ENCODE measurements at regions of chr5 and their contacts with region 1.

Region 1: DNA sequence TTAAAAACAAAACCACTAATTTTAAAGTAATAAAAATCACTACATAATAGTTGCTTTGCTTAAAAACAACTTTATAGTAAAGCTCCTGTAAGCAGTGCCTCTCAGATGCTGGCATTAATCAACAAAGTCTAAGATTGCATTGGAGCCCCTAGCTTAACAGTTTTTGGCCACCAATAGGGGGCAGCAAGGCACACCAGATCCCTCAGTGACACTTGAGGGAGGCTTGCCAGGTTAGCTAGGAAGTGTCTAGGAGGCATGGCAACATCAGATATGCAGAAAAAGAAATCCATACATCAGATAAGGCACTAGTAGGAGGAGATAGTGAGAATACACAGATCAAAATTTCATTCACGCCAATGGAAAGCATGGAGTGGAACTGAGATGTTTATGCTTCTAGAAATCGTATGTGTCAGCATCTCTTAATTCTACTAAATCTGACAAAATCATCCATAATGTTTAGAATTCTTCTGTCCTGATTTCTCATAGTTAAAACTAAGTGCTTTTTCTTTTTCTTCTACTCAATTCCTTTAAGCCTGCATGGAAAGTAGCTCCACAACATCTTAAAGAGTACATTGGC is 73.6 kb upstream of the PAM start:
- DNase-seq: peak; percentile 87
- H3K4me3 Mint-ChIP-seq: no peak overlapping the region
- H3K27ac Mint-ChIP-seq: no peak overlapping the region
- H3K4me1 Mint-ChIP-seq: no peaks in the 10 kb centered on the region
- H3K27me3 Mint-ChIP-seq: peaks cover 12% of the 10 kb centered on the region
- CTCF ChIP-seq: peak; percentile 91

Region 2: DNA sequence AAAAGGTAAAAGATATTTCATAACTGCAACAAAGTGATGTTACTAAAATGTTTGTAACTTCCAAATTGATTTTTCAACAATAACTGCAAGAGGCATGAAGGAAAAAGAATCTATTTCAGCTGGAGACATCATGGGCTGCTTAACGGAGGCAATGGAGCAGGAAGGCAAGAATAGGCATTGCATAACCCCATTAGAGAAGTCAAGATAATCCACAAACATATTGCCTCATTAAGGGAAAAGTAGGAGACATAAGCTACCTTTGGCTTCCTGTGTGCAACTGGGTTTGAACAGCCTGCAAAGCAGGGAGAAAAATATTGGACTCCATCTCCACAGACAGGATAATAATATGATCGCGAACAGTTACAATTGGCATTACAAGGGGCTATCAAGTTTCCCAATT is 432.1 kb before region 1 on chr5:
- CTCF ChIA-PET with region 1: no interaction called
- intact Hi-C with region 1: no loop called
- DNase-seq: no peak
- H3K4me3 Mint-ChIP-seq: no peak overlapping the region
- H3K27ac Mint-ChIP-seq: no peak overlapping the region
- H3K4me1 Mint-ChIP-seq: no peaks in the 10 kb centered on the region
- H3K27me3 Mint-ChIP-seq: no peaks in the 10 kb centered on the region
- CTCF ChIP-seq: no peak

Region 3: GRCh38 chr5:102700120-102700831 is 18.8 kb after region 1 on chr5:
- CTCF ChIA-PET with region 1: no interaction called
- intact Hi-C with region 1: no loop called
- DNase-seq: no peak
- H3K4me3 Mint-ChIP-seq: no peak overlapping the region
- H3K27ac Mint-ChIP-seq: no peak overlapping the region
- H3K4me1 Mint-ChIP-seq: no peaks in the 10 kb centered on the region
- H3K27me3 Mint-ChIP-seq: no peaks in the 10 kb centered on the region
- CTCF ChIP-seq: no peak

Region 4: DNA sequence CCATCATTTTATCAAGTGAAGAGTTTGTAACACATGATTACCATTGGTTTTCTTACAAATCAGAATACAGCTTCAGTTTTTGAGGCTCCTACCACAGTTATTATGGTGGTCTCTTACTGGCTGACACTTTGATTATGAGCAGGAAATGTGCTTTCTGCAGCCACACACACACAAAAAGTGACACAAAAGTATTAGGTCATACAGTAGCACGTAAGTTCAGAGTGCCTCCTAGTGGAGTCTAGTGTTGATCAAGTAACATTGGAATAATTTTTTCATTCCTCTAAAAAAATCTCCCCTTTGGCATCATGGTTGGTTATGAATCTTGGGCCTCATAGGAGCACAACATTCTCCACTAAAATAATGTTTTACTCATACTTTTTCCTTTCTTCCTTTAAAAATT is 111.2 kb after region 1 on chr5:
- CTCF ChIA-PET with region 1: interaction called, 6 read pairs
- intact Hi-C with region 1: loop called (anchors 1 kb)
- DNase-seq: peak; percentile 15
- H3K4me3 Mint-ChIP-seq: no peak overlapping the region
- H3K27ac Mint-ChIP-seq: no peak overlapping the region
- H3K4me1 Mint-ChIP-seq: peaks cover 8% of the 10 kb centered on the region
- H3K27me3 Mint-ChIP-seq: no peaks in the 10 kb centered on the region
- CTCF ChIP-seq: peak; percentile 19

Region 5: GRCh38 chr5:103424453-103425205 is 743.1 kb after region 1 on chr5:
- CTCF ChIA-PET with region 1: no interaction called
- intact Hi-C with region 1: no loop called
- DNase-seq: no peak
- H3K4me3 Mint-ChIP-seq: no peak overlapping the region
- H3K27ac Mint-ChIP-seq: no peak overlapping the region
- H3K4me1 Mint-ChIP-seq: no peaks in the 10 kb centered on the region
- H3K27me3 Mint-ChIP-seq: no peaks in the 10 kb centered on the region
- CTCF ChIP-seq: no peak

Measured in Calu3 (cell line).